ENCODE measurements at regions of chr22 and their contacts with region 1.

Region 1: DNA sequence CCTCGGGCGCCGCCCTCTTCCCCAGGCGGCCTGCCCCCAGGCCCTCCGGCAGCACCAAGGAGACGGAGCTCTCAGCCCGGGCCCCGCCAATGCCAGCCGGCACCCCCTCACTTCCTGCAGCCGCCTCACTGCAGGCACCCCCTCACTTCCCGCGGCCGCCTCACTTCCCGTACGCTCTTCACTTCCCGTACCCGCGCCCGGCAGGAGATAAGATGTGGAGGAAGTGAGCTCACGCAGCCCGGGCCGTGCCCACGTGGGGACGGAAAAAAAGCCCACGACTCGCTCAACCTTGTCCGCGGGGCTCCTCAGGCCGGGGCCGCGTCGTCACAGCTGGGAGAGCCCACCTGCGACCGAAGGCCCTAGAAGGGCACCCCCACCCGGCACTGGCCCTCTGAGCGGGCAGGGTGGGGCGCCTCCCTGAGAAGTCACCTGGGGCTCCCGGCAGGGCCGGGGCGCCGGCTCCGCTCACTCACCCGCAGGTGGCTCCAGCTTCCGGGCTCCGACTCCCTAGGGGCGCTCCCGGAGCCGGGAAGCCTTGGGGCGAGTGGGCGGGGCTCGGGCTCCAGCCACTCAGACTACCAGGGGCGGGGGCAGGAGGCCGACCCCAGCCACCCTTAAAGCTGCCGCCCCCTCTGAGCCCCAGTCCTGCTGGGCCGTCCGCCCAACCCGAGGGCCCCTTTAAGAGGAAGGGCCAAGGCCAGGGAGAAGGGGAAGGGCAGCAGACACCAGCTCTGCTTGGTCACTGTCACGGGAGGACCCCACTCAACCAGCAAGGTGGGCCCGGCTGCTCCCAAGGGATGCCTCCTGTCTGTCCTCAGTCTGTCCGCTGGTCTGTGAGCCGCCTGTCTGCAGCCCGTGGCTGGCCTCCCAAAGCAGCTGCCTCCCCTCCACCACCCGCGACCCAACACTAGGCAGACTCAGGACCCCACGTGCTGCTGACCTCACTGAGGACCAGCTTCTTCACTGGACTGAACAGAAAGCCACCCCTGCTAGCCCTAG is 31.4 kb downstream of the PISD start:
- DNase-seq: peak; percentile 69 to 94 (median 87)
- ATAC-seq: peak; percentile 92
- H3K4me3 ChIP-seq: peak overlapping the region; percentile 77 to 79
- H3K4me3 Mint-ChIP-seq: peak overlapping the region; percentile 90
- H3K27ac ChIP-seq: peak overlapping the region; percentile 85 to 98
- H3K27ac Mint-ChIP-seq: peak overlapping the region; percentile 94
- H3K4me1 ChIP-seq: peaks cover 40% of the 10 kb centered on the region
- H3K4me1 Mint-ChIP-seq: peaks cover 51% of the 10 kb centered on the region
- H3K27me3 ChIP-seq: no peaks in the 10 kb centered on the region
- H3K27me3 Mint-ChIP-seq: no peaks in the 10 kb centered on the region
- CTCF ChIP-seq: no peak

Region 2: DNA sequence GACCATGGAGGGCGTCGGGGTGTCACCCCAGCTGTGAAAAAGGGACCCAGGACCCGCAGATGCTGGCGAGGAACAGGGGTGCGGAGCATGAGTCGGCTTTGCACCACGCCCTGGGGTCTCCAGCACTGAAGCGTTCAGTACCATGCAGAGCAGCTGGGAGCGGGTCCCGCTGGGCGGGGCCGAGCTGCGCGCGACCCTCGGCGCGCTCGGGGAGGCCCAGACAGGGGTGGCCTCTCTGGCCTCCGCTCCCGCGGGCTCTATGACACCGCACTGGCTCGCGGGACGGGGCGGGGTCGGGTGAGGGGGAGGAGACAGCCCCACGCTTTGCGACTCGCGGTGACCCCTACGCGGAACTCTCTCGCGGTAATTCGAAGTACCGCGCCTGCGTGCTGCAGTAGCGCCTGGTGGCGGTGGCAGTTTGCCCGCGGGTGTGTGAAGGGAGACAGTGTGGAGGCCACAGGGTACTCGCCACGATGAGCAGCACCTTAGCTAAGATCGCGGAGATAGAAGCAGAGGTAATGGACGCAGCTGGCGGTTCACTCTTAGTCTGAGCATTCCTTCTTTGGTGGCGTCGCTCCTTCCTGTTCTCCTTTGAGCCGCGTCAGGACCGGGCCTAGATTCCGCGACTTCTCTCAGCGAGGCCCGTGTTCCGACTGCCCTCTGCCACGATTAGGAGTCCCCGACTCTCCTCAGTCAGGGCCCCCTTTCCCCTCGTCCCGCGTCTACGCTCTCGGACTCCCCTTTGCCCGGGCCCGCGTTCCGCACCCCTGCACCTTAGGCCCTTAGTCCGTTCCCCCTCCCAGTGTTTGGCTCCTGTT is 231.2 kb before region 1 on chr22 and contains the start of gene DRG1:
- CTCF ChIA-PET with region 1: no interaction called
- POLR2A ChIA-PET with region 1: no interaction called
- intact Hi-C with region 1: loop called (anchors 1 to 5 kb)
- DNase-seq: peak; percentile 91 to 98 (median 97)
- ATAC-seq: peak; percentile 96
- H3K4me3 ChIP-seq: peak within 1 kb of the TSS; percentile 76 to 99
- H3K4me3 Mint-ChIP-seq: peak within 1 kb of the TSS; percentile 95
- H3K27ac ChIP-seq: peak within 1 kb of the TSS; percentile 82 to 87
- H3K27ac Mint-ChIP-seq: peak within 1 kb of the TSS; percentile 96
- H3K4me1 ChIP-seq: peaks cover 13% of the 10 kb centered on the region
- H3K4me1 Mint-ChIP-seq: peaks cover 31% of the 10 kb centered on the region
- H3K27me3 ChIP-seq: no peaks in the 10 kb centered on the region
- H3K27me3 Mint-ChIP-seq: no peaks in the 10 kb centered on the region
- CTCF ChIP-seq: no peak
- total RNA-seq, gene DRG1: 55.9 to 63.3 TPM

Region 3: GRCh38 chr22:31451709-31452571 is 178.7 kb before region 1 on chr22:
- CTCF ChIA-PET with region 1: interaction called, 5 read pairs
- POLR2A ChIA-PET with region 1: no interaction called
- intact Hi-C with region 1: loop called (anchors 1 kb)
- DNase-seq: peak in 2 of 9 experiments; percentile 41 to 57
- ATAC-seq: peak; percentile 46
- H3K4me3 ChIP-seq: no peak overlapping the region
- H3K4me3 Mint-ChIP-seq: no peak overlapping the region
- H3K27ac ChIP-seq: no peak overlapping the region
- H3K27ac Mint-ChIP-seq: no peak overlapping the region
- H3K4me1 ChIP-seq: no peaks in the 10 kb centered on the region
- H3K4me1 Mint-ChIP-seq: no peaks in the 10 kb centered on the region
- H3K27me3 ChIP-seq: no peaks in the 10 kb centered on the region
- H3K27me3 Mint-ChIP-seq: no peaks in the 10 kb centered on the region
- CTCF ChIP-seq: peak; percentile 30

Region 4: GRCh38 chr22:31489604-31490495 is 140.8 kb before region 1 on chr22 and contains the start of gene EIF4ENIF1:
- CTCF ChIA-PET with region 1: interaction called, 3 read pairs
- POLR2A ChIA-PET with region 1: interaction called, 4 read pairs
- intact Hi-C with region 1: loop called in 1 of 2 experiments (anchors 2 kb)
- DNase-seq: peak; percentile 71 to 93 (median 85)
- ATAC-seq: peak; percentile 80
- H3K4me3 ChIP-seq: peak within 1 kb of the TSS; percentile 78 to 79
- H3K4me3 Mint-ChIP-seq: peak within 1 kb of the TSS; percentile 93
- H3K27ac ChIP-seq: peak within 1 kb of the TSS; percentile 92
- H3K27ac Mint-ChIP-seq: peak within 1 kb of the TSS; percentile 98
- H3K4me1 ChIP-seq: peaks cover 18% of the 10 kb centered on the region
- H3K4me1 Mint-ChIP-seq: peaks cover 47% of the 10 kb centered on the region
- H3K27me3 ChIP-seq: no peaks in the 10 kb centered on the region
- H3K27me3 Mint-ChIP-seq: no peaks in the 10 kb centered on the region
- CTCF ChIP-seq: no peak
- total RNA-seq, gene EIF4ENIF1: 12.1 to 14.5 TPM

Region 5: DNA sequence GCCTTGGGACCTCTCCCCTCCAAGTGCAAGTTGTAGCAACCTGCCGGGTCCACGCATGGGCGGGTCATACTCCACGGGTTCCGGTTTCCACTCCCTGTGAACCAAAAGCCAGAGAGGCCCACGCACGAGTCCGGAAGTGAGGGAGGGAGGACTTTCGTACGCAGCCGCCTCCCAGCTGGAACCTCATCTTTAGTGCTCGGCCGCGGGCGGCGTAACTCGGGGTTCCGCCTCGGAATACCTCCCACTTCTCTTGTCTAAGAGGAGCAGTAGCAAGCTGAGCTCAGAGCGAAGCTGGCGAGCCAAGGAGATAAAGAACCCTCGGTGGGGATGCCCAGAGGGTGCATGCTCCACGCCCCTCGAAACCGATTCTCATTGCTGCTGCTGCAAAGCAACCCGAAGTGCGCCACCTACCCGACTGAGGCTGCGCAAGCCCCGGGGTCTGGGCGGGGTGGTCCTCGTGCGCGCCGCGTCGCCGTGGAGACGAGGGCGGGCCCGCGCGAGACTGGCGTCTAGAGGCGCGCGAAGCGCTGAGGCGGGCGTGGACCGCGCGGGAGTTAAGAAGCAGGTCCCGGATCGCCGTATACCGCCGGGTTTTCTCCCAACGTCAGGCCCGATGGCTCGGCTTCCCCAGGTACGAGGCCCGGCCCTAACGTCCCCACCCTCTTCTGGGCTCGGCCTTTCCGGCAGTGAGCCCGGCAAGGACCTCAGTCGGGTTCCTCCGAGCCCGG is 134.5 kb before region 1 on chr22 and contains the start of gene SFI1:
- CTCF ChIA-PET with region 1: interaction called, 3 read pairs
- POLR2A ChIA-PET with region 1: interaction called, 4 read pairs
- intact Hi-C with region 1: loop called in 1 of 2 experiments (anchors 1 kb)
- DNase-seq: peak; percentile 93 to 98 (median 96)
- ATAC-seq: peak; percentile 83
- H3K4me3 ChIP-seq: peak within 1 kb of the TSS; percentile 83 to 91
- H3K4me3 Mint-ChIP-seq: peak within 1 kb of the TSS; percentile 95
- H3K27ac ChIP-seq: peak within 1 kb of the TSS; percentile 87 to 90
- H3K27ac Mint-ChIP-seq: peak within 1 kb of the TSS; percentile 99
- H3K4me1 ChIP-seq: peaks cover 27% of the 10 kb centered on the region
- H3K4me1 Mint-ChIP-seq: peaks cover 45% of the 10 kb centered on the region
- H3K27me3 ChIP-seq: no peaks in the 10 kb centered on the region
- H3K27me3 Mint-ChIP-seq: no peaks in the 10 kb centered on the region
- CTCF ChIP-seq: no peak
- total RNA-seq, gene SFI1: 217 to 235 TPM

Region 6: GRCh38 chr22:31556627-31557203 is 73.9 kb before region 1 on chr22:
- CTCF ChIA-PET with region 1: interaction called, 24 read pairs
- POLR2A ChIA-PET with region 1: interaction called, 4 read pairs
- intact Hi-C with region 1: loop called (anchors 1 kb)
- DNase-seq: peak in 2 of 9 experiments; percentile 20 to 41
- ATAC-seq: peak; percentile 65
- H3K4me3 ChIP-seq: no peak overlapping the region
- H3K4me3 Mint-ChIP-seq: no peak overlapping the region
- H3K27ac ChIP-seq: no peak overlapping the region
- H3K27ac Mint-ChIP-seq: no peak overlapping the region
- H3K4me1 ChIP-seq: no peaks in the 10 kb centered on the region
- H3K4me1 Mint-ChIP-seq: peaks cover 12% of the 10 kb centered on the region
- H3K27me3 ChIP-seq: no peaks in the 10 kb centered on the region
- H3K27me3 Mint-ChIP-seq: no peaks in the 10 kb centered on the region
- CTCF ChIP-seq: no peak

Region 7: GRCh38 chr22:31776231-31776630 is 145.6 kb after region 1 on chr22:
- CTCF ChIA-PET with region 1: no interaction called
- POLR2A ChIA-PET with region 1: no interaction called
- intact Hi-C with region 1: no loop called
- DNase-seq: no peak
- ATAC-seq: no peak
- H3K4me3 ChIP-seq: no peak overlapping the region
- H3K4me3 Mint-ChIP-seq: no peak overlapping the region
- H3K27ac ChIP-seq: no peak overlapping the region
- H3K27ac Mint-ChIP-seq: no peak overlapping the region
- H3K4me1 ChIP-seq: no peaks in the 10 kb centered on the region
- H3K4me1 Mint-ChIP-seq: no peaks in the 10 kb centered on the region
- H3K27me3 ChIP-seq: no peaks in the 10 kb centered on the region
- H3K27me3 Mint-ChIP-seq: no peaks in the 10 kb centered on the region
- CTCF ChIP-seq: no peak

Region 8: DNA sequence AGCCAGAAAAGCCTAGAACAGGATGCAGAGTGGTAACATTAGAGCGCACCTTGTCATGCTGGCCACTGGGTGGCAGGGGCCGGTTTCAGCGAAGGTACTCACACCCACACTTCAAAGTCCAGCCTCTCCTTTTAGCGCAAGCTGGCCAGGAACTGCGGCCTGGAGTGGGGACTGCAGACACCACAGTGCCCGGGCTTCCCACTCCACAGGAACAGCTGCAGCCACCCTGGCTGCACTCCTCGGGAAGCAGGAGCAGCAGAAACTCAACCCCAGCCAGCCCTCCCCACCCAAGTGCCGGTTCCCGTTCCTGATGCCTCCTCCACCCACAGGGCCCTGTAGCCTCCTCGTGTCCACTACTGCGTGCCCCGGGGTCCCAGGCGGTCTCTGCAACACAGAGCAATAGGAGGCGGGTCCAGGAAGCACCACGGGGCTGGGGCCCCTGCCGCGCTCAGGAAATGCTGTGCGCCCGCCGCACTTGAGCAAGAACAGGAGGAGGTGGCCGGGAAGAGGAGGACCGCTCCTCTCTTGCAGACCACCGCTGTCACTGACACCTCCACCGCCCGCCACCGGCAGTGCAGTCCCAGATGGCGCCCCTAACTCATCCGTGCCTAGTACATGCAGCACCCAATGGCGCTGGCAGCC is 572.0 kb after region 1 on chr22:
- CTCF ChIA-PET with region 1: no interaction called
- POLR2A ChIA-PET with region 1: no interaction called
- intact Hi-C with region 1: no loop called
- DNase-seq: peak in 3 of 9 experiments; percentile 29 to 45 (median 33)
- ATAC-seq: peak; percentile 35
- H3K4me3 ChIP-seq: peak overlapping the region; percentile 35 to 50
- H3K4me3 Mint-ChIP-seq: peak overlapping the region; percentile 66
- H3K27ac ChIP-seq: no peak overlapping the region
- H3K27ac Mint-ChIP-seq: no peak overlapping the region
- H3K4me1 ChIP-seq: peaks cover 26% of the 10 kb centered on the region
- H3K4me1 Mint-ChIP-seq: peaks cover 26% of the 10 kb centered on the region
- H3K27me3 ChIP-seq: peaks cover 2 to 5% of the 10 kb centered on the region in 2 experiments
- H3K27me3 Mint-ChIP-seq: peaks cover 19% of the 10 kb centered on the region
- CTCF ChIP-seq: no peak

Measured in CD8-positive, alpha-beta T cell (primary cell).